ENCODE measurements at regions of chr9 and their contacts with region 1.

Region 1: GRCh38 chr9:121545875-121546423 is 46.3 kb upstream of the GGTA1 start:
- DNase-seq: peak; percentile 91 to 96
- ATAC-seq: peak; percentile 94 to 98
- H3K4me3 ChIP-seq: peak overlapping the region; percentile 26; the same call in 2 of the 3 replicates
- H3K27ac ChIP-seq: peak overlapping the region; percentile 76 to 85
- H3K4me1 ChIP-seq: peaks cover 11% of the 10 kb centered on the region; the same call in 2 of the 3 replicates
- CTCF ChIP-seq: peak; percentile 90
- EP300 ChIP-seq: no peak
- POLR2A ChIP-seq: peak; percentile 25; the same call in 1 of the 2 replicates
- RAD21 ChIP-seq: peak; percentile 95 to 96

Region 2: DNA sequence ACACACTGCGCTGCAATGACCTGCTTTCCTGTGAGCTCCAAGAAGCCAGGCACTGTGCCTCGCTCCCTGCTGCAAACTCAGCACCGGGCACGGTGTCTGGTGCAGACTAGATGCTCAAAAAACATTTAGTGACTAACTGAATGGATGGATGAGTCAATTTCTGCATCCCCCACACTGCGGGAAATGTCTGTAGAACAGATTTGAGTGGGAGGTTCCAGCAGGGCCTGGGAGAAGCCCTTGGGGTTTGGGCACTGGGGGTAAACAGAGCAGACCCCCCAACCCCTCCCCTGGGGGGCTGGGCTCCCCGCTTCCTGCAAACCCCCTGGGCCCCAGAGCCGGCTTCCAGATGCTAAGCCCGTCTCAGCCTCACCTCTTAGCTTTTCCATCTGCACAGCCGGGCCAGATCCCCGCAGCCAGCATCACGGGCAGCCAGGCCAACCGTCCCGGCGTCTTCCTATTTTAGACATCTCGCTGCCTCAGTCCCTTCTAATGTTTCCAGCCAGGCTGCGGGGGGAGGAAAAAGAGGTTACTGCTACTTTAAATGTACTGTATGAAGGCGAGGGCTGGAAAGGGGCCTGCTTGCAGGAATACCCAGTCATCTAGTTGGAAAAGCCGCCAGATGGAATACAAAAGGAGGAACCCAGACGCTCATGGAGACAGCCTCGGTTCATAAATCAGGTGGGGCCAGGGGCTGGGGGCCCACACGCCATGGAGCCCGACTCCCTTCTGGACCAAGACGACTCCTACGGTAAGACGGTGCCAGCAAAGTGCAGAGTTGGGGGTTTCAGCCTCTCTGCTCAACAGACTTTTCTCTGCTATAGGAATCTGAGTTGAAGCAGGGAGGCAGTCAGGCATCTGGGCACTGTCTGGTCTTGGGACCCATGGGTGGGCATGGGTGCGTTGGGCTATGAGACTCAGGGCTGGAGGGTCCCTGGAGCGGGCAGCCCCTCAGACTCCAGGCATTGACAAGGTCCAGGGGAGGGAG is 20.8 kb after region 1 on chr9:
- CTCF ChIA-PET with region 1: interaction called, 41 read pairs
- POLR2A ChIA-PET with region 1: no interaction called
- DNase-seq: no peak
- ATAC-seq: no peak
- H3K4me3 ChIP-seq: no peak overlapping the region
- H3K27ac ChIP-seq: no peak overlapping the region
- H3K4me1 ChIP-seq: no peaks in the 10 kb centered on the region
- CTCF ChIP-seq: no peak
- EP300 ChIP-seq: no peak
- POLR2A ChIP-seq: no peak
- RAD21 ChIP-seq: no peak

Region 3: DNA sequence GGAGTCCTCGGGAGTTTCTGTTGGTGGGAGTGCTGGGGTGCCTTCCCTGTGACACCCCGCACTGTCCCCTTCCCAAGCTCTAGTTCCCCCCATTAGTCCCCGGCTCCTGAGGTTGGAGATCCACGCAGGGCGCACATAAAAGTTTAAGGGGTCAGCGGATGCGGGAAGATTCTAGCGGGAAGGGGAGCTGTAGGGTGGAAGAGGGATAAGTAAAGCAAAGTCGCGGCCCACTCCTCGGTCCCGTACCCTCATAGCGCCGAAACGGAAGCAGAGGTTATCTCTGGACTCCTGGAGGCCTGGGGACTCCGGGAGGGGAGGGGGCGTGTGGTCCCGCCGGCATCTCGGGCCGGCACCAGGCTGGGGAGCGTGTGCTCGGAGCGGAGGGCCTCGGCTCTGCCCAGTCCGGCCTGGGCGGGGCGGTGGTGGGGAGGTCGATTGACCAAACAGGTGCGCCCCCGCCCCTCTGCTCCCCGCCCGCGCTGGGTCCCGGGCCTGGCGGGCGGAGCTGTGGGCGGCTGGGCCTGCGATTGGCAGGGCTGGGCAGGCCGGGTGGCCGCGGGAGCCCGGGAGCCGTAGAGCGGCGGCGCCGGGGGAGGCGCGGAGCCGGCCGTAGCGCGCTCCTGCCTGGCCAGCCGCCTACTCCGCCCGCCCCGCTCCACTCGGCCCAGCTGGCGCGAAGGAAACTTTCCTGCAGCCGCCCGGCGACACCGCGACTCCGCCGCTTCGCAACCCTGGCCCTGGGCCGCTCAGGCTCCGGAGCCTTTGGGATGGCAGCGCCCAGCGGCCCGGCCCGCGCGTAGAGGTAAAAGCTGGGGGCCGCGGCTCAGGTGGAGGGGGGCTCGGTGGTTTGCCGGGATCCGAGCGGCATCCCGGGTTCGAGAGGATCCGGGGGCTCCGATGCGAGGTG is 53.3 kb after region 1 on chr9:
- CTCF ChIA-PET with region 1: interaction called, 13 read pairs
- POLR2A ChIA-PET with region 1: no interaction called
- DNase-seq: peak; percentile 64 to 84
- ATAC-seq: peak; percentile 88 to 97
- H3K4me3 ChIP-seq: peak overlapping the region; percentile 61
- H3K27ac ChIP-seq: peak overlapping the region; percentile 60 to 90
- H3K4me1 ChIP-seq: peaks cover 5% of the 10 kb centered on the region; the same call in 1 of the 3 replicates
- CTCF ChIP-seq: no peak
- EP300 ChIP-seq: no peak; a peak in 1 of 5 replicates
- POLR2A ChIP-seq: peak; percentile 45
- RAD21 ChIP-seq: no peak

Region 4: GRCh38 chr9:121634329-121635261 is 88.6 kb after region 1 on chr9:
- CTCF ChIA-PET with region 1: interaction called, 13 read pairs
- POLR2A ChIA-PET with region 1: no interaction called
- DNase-seq: peak; percentile 46 to 58
- ATAC-seq: peak; percentile 85 to 93
- H3K4me3 ChIP-seq: no peak overlapping the region
- H3K27ac ChIP-seq: peak overlapping the region in 1 of 2 experiments; percentile 37; a peak in 1 of 6 replicates
- H3K4me1 ChIP-seq: peaks cover 23% of the 10 kb centered on the region
- CTCF ChIP-seq: peak; percentile 72
- EP300 ChIP-seq: no peak
- POLR2A ChIP-seq: no peak
- RAD21 ChIP-seq: peak; percentile 81 to 84

Region 5: GRCh38 chr9:121686930-121687541 is 141.1 kb after region 1 on chr9:
- CTCF ChIA-PET with region 1: interaction called, 51 read pairs
- POLR2A ChIA-PET with region 1: no interaction called
- DNase-seq: peak; percentile 71 to 79
- ATAC-seq: peak; percentile 84 to 92
- H3K4me3 ChIP-seq: no peak overlapping the region
- H3K27ac ChIP-seq: no peak overlapping the region
- H3K4me1 ChIP-seq: no peaks in the 10 kb centered on the region
- CTCF ChIP-seq: peak; percentile 84
- EP300 ChIP-seq: no peak
- POLR2A ChIP-seq: no peak
- RAD21 ChIP-seq: peak; percentile 85 to 88

Region 6: GRCh38 chr9:121997791-121998190 is 451.8 kb after region 1 on chr9:
- CTCF ChIA-PET with region 1: interaction called, 21 read pairs
- POLR2A ChIA-PET with region 1: no interaction called
- DNase-seq: no peak
- ATAC-seq: no peak
- H3K4me3 ChIP-seq: no peak overlapping the region
- H3K27ac ChIP-seq: no peak overlapping the region
- H3K4me1 ChIP-seq: peaks cover 15% of the 10 kb centered on the region
- CTCF ChIP-seq: no peak
- EP300 ChIP-seq: no peak
- POLR2A ChIP-seq: no peak
- RAD21 ChIP-seq: no peak